ENCODE measurements at regions of chr14 and their contacts with region 1.

Region 1: DNA sequence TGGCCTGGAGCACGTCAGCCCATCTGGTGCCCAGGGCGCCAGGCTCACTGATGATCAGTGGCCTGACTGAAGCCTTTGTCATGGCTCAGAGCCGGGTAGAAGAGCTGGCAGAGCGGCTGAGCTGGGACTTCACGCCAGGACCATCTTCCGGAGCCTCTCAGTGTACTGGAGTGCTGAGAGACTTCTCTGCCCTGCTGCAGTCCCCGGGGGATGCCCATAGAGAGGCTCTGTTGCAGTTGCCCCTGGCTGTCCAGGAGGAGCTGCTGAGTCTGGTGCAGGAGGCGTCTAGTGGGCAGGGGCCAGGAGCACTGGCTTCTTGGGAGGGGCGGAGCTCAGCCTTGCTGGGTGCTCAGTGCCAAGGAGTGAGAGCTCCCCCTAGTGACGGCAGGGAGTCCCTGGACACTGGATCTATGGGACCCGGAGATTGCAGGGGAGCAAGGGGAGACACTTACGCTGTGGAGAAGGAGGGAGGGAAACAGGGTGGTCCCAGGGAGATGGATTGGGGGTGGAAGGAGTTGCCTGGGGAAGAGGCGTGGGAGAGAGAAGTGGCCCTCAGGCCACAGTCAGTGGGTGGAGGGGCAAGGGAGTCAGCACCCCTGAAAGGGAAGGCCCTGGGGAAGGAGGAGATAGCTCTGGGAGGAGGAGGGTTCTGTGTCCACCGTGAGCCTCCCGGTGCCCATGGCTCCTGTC is 2.0 kb downstream of the KHNYN start:
- DNase-seq: peak; percentile 86

Region 2: DNA sequence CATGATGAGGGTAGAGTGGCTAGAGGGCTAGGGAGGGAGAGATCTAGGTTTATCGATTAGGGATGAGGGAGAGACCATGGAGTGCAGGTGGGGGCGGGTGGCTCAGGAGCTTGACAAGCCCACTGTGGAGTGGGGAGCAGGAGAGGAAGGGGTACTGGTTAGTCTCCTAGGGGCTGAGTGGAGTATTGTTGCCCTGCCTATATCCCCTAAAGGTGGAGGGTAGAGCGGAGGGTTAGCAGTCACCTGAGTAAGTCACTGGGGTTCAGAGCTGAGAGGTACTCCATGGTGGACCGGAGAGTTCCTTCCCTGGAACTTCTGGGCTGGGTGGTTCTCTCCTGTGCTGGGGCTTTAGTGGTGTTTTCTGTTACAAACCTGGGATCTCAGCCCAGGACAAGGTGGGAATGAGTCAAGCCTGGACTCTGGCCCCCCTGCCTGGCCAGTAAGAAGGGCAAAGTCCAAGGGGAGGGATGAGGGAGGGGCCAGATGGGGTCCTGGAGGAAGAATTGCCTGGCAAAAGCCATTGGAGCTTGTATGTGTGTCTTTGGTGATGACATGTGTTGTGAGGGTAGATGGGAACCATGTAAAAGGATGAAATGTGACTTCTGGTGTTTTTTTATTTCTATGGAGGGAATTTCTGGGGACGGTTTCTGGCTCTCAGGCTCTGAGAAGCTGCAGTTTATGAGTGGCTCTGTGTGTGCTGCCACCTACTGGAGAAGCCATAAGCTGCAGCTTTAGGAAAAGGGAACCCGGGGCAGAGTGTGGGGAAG is 124.0 kb before region 1 on chr14 and contains the start of gene CIDEB:
- CTCF ChIA-PET with region 1: interaction called, 29 read pairs
- POLR2A ChIA-PET with region 1: interaction called, 15 read pairs
- DNase-seq: peak; percentile 78

Region 3: GRCh38 chr14:24339284-24340151 is 92.2 kb before region 1 on chr14 and contains the start of gene RIPK3:
- CTCF ChIA-PET with region 1: interaction called, 145 read pairs
- POLR2A ChIA-PET with region 1: interaction called, 9 read pairs
- DNase-seq: no peak

Region 4: GRCh38 chr14:24377657-24378056 is 54.1 kb before region 1 on chr14:
- CTCF ChIA-PET with region 1: interaction called, 4 read pairs
- POLR2A ChIA-PET with region 1: interaction called, 34 read pairs
- DNase-seq: no peak

Region 5: DNA sequence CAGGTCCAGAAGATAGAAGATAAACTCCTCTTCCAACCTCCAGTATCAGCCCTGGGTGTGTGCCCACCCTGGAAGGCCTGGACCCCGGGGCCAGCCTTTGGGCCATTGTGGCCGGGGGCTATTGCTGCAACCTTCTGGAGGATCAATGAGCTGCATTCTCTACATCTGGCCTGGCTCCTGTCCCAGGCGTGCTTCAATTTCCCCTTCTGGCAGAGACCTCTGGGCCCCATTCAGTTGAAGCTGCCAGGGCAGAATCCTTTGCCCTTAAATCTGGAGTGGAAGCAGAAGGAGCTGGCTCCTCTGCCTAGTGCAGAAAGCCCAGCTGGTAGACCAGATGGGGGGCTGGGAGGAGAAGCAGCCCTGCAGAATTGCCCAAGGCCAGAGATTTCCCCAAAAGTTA is 22.9 kb before region 1 on chr14:
- CTCF ChIA-PET with region 1: interaction called, 10 read pairs
- POLR2A ChIA-PET with region 1: interaction called, 16 read pairs
- DNase-seq: no peak